Dorsolateral prefrontal cortex (tissue), 120 donors: ENCODE measurements at regions of chr9 and their contacts with region 1.

Region 1: DNA sequence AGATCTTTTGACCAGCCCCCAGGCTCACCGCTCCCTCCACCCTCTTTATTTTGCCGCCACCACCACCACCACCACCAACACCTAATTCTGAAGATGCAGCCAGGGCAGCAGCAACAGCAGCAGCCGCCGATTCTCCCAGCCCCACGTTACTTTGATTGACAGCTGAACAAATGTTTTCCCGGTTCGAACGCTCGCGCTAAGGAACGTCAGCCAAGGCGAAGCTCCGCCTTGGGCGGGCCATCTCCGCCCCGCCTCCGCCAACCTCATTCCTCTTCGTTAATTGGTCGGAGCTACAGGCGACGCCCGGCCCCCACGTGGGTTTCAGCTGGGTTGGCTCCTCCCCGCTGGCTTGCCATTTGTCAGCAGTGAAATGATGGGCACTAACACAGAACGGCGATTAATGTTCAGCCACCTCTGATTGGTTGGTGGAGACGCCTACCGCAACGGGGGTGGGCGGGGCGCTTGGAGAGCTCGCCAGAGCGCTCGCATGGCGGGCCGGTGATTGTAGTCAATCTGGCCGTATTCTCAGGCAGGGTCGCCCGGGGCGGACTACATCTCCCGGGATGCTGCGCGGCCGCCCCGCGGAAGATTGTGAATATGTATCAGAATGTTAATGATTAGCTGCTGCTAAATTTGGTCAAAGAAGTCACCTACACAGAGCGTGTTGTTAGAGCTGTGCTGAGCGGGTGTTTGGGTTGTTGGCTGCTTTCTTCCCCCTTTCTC is at the start of gene TLE4:
- DNase-seq: peak; percentile 100
- H3K4me3 ChIP-seq: peak within 1 kb of the TSS; percentile 64 to 99 (median 91)
- H3K27ac ChIP-seq: peak within 1 kb of the TSS; percentile 77 to 99 (median 96)
- H3K27me3 ChIP-seq: no peaks in the 10 kb centered on the region
- CTCF ChIP-seq: peak in 16 of 56 donors; percentile 6 to 37 (median 18)
- total RNA-seq, gene TLE4: 47.8 to 183 (median 109) TPM

Region 2: DNA sequence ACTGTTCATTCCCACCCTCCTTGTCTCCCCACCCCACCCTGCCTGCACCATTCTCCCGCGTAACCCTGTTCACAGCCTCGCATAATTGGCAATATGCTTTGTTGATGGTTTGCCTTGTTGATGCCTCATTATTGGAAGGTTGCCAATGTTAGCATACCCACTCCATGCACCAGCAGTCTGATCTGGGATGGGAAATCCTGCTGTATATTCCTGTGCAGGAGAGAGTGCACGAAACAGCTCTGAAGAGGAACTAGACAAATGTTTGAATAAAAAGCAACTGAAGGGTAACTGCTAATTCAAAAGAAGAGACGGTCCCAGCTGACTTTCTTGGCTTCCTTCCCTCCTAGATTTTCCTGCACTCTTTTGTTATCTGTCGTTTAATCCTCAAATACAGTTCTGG is 271.4 kb before region 1 on chr9:
- intact Hi-C with region 1: no loop called
- DNase-seq: no peak
- H3K4me3 ChIP-seq: no peak overlapping the region
- H3K27ac ChIP-seq: no peak overlapping the region
- H3K27me3 ChIP-seq: peaks cover 0 to 17% (median 0%) of the 10 kb centered on the region in 45 donors
- CTCF ChIP-seq: no peak

Region 3: GRCh38 chr9:79477955-79478771 is 93.3 kb before region 1 on chr9:
- intact Hi-C with region 1: loop called (anchors 2 to 5 kb)
- DNase-seq: peak in 8 of 10 donors; percentile 23 to 73 (median 47)
- H3K4me3 ChIP-seq: no peak overlapping the region
- H3K27ac ChIP-seq: peak overlapping the region in 36 of 59 donors; percentile 5 to 80 (median 58)
- H3K27me3 ChIP-seq: no peaks in the 10 kb centered on the region
- CTCF ChIP-seq: peak in 54 of 56 donors; percentile 12 to 86 (median 66)

Region 4: GRCh38 chr9:79559495-79560181 is 11.8 kb before region 1 on chr9:
- intact Hi-C with region 1: loop called in 1 of 2 experiments (anchors 1 kb)
- DNase-seq: peak in 1 of 10 donors; percentile 29
- H3K4me3 ChIP-seq: peak overlapping the region in 36 of 59 donors; percentile 1 to 54 (median 24)
- H3K27ac ChIP-seq: peak overlapping the region; percentile 23 to 99 (median 93)
- H3K27me3 ChIP-seq: no peaks in the 10 kb centered on the region
- CTCF ChIP-seq: peak in 3 of 56 donors; percentile 8 to 20 (median 12)

Region 5: GRCh38 chr9:79662537-79662956 is 91.1 kb after region 1 on chr9:
- intact Hi-C with region 1: loop called (anchors 5 to 10 kb)
- DNase-seq: no peak
- H3K4me3 ChIP-seq: peak overlapping the region in 43 of 59 donors; percentile 0 to 56 (median 40)
- H3K27ac ChIP-seq: peak overlapping the region in 36 of 59 donors; percentile 1 to 75 (median 41)
- H3K27me3 ChIP-seq: no peaks in the 10 kb centered on the region
- CTCF ChIP-seq: no peak

Region 6: DNA sequence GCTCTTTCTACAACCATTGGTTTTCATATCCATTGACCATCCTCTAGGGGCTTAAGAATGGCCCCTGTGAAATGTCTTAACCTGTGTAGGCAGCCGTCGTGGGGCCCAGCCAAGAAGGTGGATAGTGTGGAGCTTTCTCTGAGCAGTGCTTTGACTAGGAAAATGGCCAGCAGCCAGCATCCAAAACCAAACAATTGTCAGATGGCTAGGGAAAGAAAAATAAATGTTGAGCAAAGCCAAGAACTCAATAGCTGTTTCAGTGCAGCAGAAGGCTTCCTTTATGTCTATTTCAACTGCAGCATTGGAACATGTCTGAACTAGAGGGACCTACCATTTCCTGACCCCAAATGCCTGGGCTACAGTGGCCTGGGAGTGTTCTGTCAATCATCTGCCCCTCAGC is 375.2 kb after region 1 on chr9:
- intact Hi-C with region 1: loop called in 1 of 2 experiments (anchors 10 kb)
- DNase-seq: peak in 2 of 10 donors; percentile 31 to 59
- H3K4me3 ChIP-seq: no peak overlapping the region
- H3K27ac ChIP-seq: no peak overlapping the region
- H3K27me3 ChIP-seq: no peaks in the 10 kb centered on the region
- CTCF ChIP-seq: no peak